ENCODE measurements at regions of chr9 and their contacts with region 1.

Region 1: DNA sequence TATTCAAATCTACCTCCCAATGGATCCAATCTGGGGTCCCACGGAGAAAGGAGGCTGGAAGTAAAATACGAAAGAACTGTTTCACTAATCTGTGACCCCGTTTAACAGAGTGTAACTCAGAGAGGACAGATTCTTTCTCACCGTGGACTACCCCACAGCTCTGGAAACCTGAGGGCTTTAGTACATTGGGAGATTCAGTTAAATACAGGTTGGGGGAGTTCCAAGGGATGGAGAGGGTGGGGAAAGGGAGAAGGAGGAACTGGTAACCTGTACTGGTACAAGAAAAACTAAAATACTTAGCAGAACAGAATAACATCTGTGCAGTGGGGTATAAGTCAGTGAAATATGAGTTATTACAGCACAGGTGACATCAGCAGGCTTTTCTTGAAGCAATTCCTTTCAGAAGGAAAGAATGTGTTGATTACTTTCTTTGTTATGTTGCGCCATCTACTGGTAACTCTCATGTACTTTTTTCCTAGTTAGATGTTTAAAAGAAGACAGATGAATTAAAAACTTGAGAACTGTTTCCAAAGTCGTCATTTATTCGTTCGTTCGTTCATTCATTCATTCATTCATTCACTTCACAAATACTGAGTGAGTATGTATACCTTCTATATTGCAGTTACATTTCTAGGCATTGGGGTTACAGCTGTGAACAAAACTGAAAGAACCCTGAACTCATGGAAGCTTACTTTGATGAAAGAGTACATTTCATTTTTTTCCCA is 30.0 kb upstream of the STOM start:
- DNase-seq: no peak
- ATAC-seq: peak; percentile 45 to 62 (median 58)
- H3K4me3 ChIP-seq: no peak overlapping the region
- H3K27ac ChIP-seq: no peak overlapping the region
- H3K4me1 ChIP-seq: peaks cover 0 to 4% (median 0%) of the 10 kb centered on the region in 12 donors
- H3K27me3 ChIP-seq: no peaks in the 10 kb centered on the region
- CTCF ChIP-seq: peak; percentile 64 to 80 (median 70)
- POLR2A ChIP-seq: no peak

Region 2: DNA sequence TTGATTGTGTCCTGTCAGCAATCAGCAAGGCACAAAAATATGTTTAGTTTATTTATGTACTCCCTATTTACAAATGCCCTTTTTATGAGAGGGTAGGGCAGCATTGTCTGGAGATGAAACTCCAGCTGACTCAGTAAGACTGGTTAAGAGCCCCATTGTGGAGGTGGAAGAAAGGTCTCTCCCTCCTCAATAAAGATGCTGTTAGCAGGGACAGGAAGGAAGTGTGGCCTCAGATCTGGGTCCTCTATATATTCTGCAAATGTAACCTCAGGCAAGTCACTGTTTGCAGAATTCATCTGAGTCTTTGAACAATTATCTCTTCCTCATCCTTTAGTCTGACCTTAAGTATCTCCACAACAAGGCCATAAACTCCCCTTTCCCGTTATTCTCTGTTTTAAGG is 425.1 kb before region 1 on chr9:
- intact Hi-C with region 1: loop called in 4 of 10 experiments (anchors 5 to 10 kb)
- DNase-seq: no peak
- ATAC-seq: no peak
- H3K4me3 ChIP-seq: no peak overlapping the region
- H3K27ac ChIP-seq: peak overlapping the region in 1 of 12 donors; percentile 48
- H3K4me1 ChIP-seq: peaks cover 0 to 4% (median 0%) of the 10 kb centered on the region in 12 donors
- H3K27me3 ChIP-seq: no peaks in the 10 kb centered on the region
- CTCF ChIP-seq: no peak
- POLR2A ChIP-seq: no peak

Region 3: DNA sequence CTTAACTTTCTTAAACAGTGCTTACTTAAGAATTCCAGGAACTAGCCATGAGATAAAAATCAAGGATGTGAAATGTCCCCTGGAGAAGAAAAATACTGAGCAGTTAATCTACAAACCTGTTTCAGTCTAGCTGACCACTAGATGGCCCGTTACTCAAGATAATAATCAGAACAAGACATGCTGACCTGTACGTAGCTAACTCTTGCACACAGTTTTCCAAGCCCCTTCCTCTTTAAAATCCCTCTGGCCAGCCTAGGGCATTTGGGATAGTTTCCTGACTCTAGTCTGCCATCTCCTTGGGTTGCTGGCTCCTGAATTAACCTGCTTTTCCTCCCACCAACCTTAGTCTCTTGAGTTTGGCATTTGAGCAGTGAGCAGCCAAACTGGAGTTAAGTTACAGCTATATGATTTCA is 414.2 kb before region 1 on chr9:
- intact Hi-C with region 1: loop called in 3 of 10 experiments (anchors 5 to 10 kb)
- DNase-seq: peak in 1 of 5 donors; percentile 9
- ATAC-seq: peak; percentile 41 to 73 (median 64)
- H3K4me3 ChIP-seq: no peak overlapping the region
- H3K27ac ChIP-seq: no peak overlapping the region
- H3K4me1 ChIP-seq: peaks cover 0 to 9% (median 0%) of the 10 kb centered on the region in 12 donors
- H3K27me3 ChIP-seq: no peaks in the 10 kb centered on the region
- CTCF ChIP-seq: peak in 11 of 12 donors; percentile 27 to 56 (median 50)
- POLR2A ChIP-seq: no peak

Region 4: DNA sequence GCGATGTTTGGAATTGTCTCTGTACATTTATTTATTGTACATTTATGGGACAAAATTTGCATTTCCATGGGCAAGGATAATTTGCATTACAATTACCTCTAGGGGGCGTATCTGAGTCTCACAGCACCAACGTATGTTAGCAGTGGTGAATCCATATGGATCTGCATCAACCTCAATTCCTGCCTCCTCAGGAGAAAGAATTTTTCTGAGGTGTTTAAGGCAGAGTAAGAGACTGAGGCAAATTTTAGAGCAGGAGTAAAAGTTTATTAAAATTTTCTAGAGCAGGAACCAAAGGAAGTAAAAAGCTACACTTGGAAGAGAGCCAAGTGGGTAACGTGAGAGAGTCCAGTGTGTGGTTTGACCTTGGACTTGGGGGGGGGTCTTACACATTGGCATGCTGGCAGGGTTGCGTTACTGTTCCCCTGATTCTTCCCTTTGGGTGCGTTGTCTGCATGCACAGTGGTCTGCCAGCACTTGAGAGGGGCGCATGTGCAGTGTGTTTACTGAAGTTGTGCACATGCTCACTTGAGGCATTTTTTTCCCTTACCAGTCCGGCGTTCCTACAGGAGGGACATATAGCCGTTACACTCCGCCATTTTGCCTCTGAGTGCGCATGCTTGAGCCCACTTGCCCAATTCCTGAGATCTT is 177.4 kb before region 1 on chr9:
- intact Hi-C with region 1: loop called in 1 of 10 experiments (anchors 5 kb)
- DNase-seq: no peak
- ATAC-seq: peak in 1 of 4 donors; percentile 56
- H3K4me3 ChIP-seq: no peak overlapping the region
- H3K27ac ChIP-seq: no peak overlapping the region
- H3K4me1 ChIP-seq: peaks cover 0 to 9% (median 0%) of the 10 kb centered on the region in 12 donors
- H3K27me3 ChIP-seq: no peaks in the 10 kb centered on the region
- CTCF ChIP-seq: peak; percentile 59 to 84 (median 75)
- POLR2A ChIP-seq: no peak

Region 5: GRCh38 chr9:121321016-121321503 is 79.0 kb before region 1 on chr9:
- intact Hi-C with region 1: loop called in 8 of 10 experiments (anchors 1 to 5 kb)
- DNase-seq: peak in 1 of 5 donors; percentile 26
- ATAC-seq: no peak
- H3K4me3 ChIP-seq: no peak overlapping the region
- H3K27ac ChIP-seq: peak overlapping the region in 11 of 12 donors; percentile 26 to 98 (median 85)
- H3K4me1 ChIP-seq: peaks cover 10 to 88% (median 67%) of the 10 kb centered on the region in 12 donors
- H3K27me3 ChIP-seq: no peaks in the 10 kb centered on the region
- CTCF ChIP-seq: no peak
- POLR2A ChIP-seq: no peak

Region 6: GRCh38 chr9:121359351-121360294 is 40.4 kb before region 1 on chr9:
- intact Hi-C with region 1: no loop called
- DNase-seq: no peak
- ATAC-seq: peak; percentile 24 to 52 (median 40)
- H3K4me3 ChIP-seq: no peak overlapping the region
- H3K27ac ChIP-seq: peak overlapping the region; percentile 46 to 99 (median 96)
- H3K4me1 ChIP-seq: peaks cover 23 to 100% (median 91%) of the 10 kb centered on the region in 12 donors
- H3K27me3 ChIP-seq: no peaks in the 10 kb centered on the region
- CTCF ChIP-seq: no peak
- POLR2A ChIP-seq: no peak

Region 7: GRCh38 chr9:121369595-121370265 is 30.3 kb before region 1 on chr9 and contains the start of gene STOM:
- intact Hi-C with region 1: loop called in 1 of 10 experiments (anchors 2 kb)
- DNase-seq: peak; percentile 89 to 95 (median 93)
- ATAC-seq: peak; percentile 63 to 86 (median 74)
- H3K4me3 ChIP-seq: peak within 1 kb of the TSS; percentile 19 to 88 (median 78)
- H3K27ac ChIP-seq: peak within 1 kb of the TSS; percentile 91 to 99 (median 96)
- H3K4me1 ChIP-seq: peaks cover 12 to 78% (median 69%) of the 10 kb centered on the region in 12 donors
- H3K27me3 ChIP-seq: no peaks in the 10 kb centered on the region
- CTCF ChIP-seq: no peak
- POLR2A ChIP-seq: peak; percentile 94 to 100
- total RNA-seq, gene STOM: 125 to 239 (median 154) TPM

Measured in heart left ventricle (tissue), 16 donors.